Tibial artery (tissue), 4 donors: ENCODE measurements at regions of chr18 and their contacts with region 1.

Region 1: DNA sequence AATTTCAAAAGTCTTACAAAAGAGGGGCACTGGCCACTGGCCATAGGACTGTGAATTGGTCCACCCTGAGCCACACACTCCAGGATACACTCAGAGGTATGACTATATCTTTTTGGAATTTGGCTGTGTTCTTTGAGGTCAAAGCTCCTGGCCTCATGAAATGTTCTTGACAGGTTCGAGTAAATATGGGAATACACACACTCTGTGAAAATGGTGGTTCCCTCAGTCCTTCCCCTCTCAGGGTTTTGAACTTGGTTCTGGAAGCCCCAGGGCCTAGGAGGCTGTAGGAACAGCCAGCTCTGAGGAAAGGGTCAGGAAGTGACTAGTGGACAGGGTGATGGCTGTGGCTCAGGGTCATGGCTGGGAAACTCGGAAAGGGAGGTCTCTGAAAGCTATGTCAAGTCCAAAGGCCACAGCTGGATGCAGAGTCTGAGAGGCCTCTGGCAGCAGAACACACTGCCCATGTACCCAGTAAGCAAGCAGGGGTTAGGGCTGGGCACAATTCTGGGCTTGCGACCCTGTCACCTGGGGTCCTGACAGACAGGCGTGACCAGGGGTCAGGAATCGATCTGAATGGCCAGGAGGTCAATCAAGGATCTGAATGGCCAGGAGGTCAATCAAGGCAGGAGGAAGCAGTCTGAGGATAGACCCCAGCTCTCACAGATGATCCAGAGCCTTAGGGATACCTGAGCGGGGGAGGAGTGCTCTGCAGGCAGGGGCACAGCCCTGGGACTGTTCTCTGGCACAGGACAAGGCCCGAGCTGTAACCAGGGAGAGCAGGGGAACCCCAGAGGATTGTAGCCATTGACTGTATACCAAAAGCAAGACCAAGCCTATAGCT is 223.4 kb upstream of the SMAD2 start:
- DNase-seq: peak in 1 of 2 donors; percentile 65
- H3K4me3 ChIP-seq: no peak overlapping the region
- H3K27ac ChIP-seq: peak overlapping the region; percentile 32 to 55
- H3K4me1 ChIP-seq: peaks cover 0 to 33% (median 15%) of the 10 kb centered on the region in 4 donors
- H3K27me3 ChIP-seq: no peaks in the 10 kb centered on the region
- CTCF ChIP-seq: no peak

Region 2: DNA sequence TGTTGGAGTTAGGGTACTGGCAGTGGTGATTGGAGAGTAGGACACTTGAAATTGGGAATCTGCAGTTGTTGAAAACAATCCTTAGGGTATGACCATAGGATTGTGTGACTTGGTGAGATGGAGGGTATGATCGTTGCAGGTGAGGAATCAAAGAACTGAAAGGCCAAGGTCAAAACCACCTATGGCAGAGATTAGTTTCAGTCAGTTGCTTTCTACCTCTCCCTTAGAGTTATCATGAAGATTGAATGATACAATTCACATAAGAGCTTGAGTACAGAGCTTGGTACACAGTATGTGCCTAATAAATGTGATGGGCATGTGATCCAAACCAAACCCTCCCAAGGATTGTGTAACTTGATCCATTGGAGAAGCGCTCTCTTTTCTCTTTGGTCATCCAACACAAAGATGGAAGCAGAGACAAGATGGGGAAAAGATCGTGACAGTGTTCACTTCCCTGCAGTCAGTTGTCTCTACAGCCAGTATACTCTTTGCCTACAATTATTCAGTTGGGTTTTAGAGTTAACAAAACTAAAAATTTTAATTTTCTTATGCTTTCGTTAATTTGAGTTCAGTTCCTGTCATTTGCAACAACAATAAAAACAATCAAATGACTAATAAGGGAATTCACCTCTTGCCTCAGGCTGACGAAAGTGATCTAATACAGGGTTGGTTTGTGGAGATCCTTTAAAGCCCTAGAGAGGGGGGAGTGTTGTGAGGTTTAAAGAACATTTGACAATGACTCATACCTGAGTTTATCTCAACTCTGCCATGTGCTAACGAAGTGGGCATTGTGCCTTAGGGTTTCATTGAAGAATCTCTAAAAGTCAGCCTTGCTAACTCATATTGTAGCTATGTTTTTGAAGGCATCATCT is 208.7 kb before region 1 on chr18:
- intact Hi-C with region 1: no loop called
- DNase-seq: no peak
- H3K4me3 ChIP-seq: no peak overlapping the region
- H3K27ac ChIP-seq: no peak overlapping the region
- H3K4me1 ChIP-seq: no peaks in the 10 kb centered on the region
- H3K27me3 ChIP-seq: no peaks in the 10 kb centered on the region
- CTCF ChIP-seq: no peak

Region 3: DNA sequence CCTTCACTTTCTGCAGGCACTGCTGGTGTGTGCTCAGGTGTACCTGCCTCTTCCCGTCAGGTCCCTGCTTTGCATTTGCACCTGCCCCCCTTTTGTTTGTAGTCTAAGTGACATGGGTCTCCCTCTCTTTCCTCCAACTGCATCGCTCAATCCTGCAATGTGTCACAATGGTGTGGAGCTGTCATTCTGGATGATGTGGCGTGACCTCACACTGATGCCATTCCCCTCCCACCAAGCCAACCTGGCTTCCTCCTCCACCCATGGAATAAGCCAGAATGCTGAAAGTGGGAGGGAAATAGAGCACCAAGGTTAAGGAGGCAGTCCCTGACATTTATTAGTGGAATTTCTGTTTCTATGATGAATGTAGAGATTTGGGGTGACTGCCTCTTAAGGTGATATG is 98.7 kb after region 1 on chr18:
- intact Hi-C with region 1: no loop called
- DNase-seq: no peak
- H3K4me3 ChIP-seq: no peak overlapping the region
- H3K27ac ChIP-seq: no peak overlapping the region
- H3K4me1 ChIP-seq: no peaks in the 10 kb centered on the region
- H3K27me3 ChIP-seq: no peaks in the 10 kb centered on the region
- CTCF ChIP-seq: no peak

Region 4: GRCh38 chr18:48410095-48410920 is 256.4 kb after region 1 on chr18:
- intact Hi-C with region 1: loop called (anchors 10 kb)
- DNase-seq: peak; percentile 93 to 96
- H3K4me3 ChIP-seq: peak overlapping the region; percentile 89 to 92
- H3K27ac ChIP-seq: peak overlapping the region; percentile 85 to 91
- H3K4me1 ChIP-seq: peaks cover 0 to 36% (median 21%) of the 10 kb centered on the region in 4 donors
- H3K27me3 ChIP-seq: no peaks in the 10 kb centered on the region
- CTCF ChIP-seq: peak in 1 of 2 experiments; percentile 11